ENCODE measurements at regions of chr1 and their contacts with region 1.

Region 1: DNA sequence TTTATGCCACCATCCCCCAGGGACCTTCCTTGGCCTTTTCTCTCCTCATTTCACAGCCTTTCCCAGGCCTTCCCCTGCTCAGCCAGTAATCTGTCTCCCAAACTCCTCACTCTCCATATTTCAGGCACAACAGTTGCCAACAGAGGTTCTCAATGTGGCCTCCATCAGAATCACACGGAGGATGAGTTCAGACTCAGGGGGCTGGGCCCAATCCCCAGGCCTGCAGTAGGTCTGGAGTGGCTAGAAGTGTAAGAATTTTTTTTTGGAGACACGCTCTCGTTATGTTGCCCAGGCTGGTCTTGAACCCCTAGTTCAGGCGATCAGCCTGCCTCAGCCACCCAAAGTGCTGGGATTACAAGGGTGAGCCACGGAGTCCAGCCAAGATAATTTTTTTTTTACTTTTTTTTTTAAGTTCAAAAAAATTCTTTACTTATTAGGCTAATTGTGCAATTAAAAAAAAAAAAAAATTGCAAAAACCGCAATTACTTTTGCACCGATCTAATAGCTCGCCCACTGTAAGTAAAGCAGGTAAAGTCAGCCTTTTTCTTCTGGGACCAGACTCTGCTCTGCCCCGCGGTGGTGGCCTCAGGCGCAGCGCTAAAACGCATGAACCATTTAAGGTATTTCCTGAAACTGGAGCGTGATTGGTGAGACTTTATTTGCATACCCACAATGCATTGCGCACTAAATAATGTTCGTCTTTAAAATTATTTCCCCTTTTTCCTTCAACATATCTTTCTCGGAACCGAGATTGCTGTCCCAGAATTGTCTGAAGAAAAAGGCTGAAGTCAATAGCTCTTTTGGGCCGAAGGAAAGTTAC is 18.7 kb downstream of the KIAA2013 start:
- DNase-seq: peak; percentile 95
- H3K4me3 Mint-ChIP-seq: peak overlapping the region; percentile 92
- H3K27ac Mint-ChIP-seq: peak overlapping the region; percentile 99
- H3K4me1 Mint-ChIP-seq: peaks cover 37% of the 10 kb centered on the region
- H3K27me3 Mint-ChIP-seq: peaks cover 16% of the 10 kb centered on the region

Region 2: DNA sequence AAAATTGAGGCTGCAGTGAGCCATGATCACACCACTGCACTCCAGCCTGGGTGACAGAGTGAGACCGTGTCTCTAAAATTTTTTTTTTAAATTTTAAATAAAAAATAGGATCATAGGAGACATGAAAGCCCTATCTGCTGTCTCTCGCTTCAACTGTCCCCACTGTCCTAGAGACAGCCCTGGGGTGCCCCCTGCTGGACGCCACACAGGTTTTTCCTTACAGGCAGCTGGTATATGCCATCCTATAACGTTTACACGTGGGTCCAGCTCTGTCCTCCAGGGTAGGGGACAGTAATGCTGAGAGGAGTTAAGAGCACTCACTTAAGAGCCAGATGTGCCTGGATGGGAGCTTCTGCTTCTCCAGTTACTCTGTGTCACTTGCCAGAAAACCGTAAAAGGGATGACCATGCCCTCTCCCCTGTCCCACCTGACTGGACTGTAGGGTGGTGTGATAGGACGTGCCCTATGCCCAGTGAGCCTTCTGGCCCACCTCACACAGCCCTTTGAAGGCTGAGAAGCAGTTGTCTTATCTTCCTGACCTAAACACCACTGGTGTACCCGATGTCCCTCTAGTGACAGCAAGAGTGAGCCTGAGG is 261.7 kb before region 1 on chr1:
- CTCF ChIA-PET with region 1: no interaction called
- POLR2A ChIA-PET with region 1: interaction called, 14 read pairs
- intact Hi-C with region 1: no loop called
- DNase-seq: peak; percentile 88
- H3K4me3 Mint-ChIP-seq: no peak overlapping the region
- H3K27ac Mint-ChIP-seq: no peak overlapping the region
- H3K4me1 Mint-ChIP-seq: peaks cover 11% of the 10 kb centered on the region
- H3K27me3 Mint-ChIP-seq: no peaks in the 10 kb centered on the region

Region 3: DNA sequence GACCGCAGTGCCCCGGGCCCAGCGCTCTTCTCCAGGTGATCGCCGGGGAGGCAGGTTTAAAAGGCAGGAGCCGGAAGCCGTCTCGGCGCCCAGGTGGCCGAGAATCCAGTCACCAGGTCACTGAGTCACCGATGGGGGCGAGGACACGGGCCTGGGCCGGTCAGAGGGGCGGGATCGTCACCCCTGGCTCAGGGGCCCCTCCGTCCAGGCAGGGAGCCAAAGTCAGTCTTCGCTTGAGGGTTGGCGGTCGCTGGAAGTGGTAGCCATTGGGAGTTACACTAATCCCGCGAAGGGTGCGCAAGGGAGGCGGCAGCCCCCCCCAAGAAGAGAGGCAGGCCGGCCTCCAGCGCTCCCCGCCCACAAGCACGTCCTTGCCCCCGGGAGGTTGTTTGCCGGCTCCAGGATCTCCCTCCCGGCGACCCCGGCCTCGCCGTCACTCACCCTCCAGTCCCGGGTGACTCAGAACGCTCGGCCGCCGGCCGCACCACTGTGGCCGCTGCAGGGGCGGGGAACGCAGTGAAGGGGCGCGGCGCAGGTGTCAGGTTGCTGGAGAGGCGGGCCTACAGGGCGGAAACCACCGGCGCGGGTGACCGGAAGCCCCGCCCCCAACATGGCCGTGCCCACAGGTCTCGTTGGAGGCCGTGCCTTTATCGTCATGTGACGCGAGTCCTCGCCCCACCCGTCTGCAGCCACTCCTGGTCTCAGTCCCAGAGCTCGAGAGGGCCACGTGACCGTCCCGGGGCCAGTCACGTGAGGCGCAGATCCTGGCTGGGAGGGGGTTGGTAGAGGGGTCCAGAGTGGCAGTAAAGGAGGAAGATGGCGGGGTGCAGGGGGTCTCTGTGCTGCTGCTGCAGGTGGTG is 101.8 kb before region 1 on chr1 and contains the starts of genes CLCN6 and MTHFR:
- CTCF ChIA-PET with region 1: no interaction called
- POLR2A ChIA-PET with region 1: interaction called, 57 read pairs
- intact Hi-C with region 1: loop called (anchors 1 kb)
- DNase-seq: peak; percentile 99
- H3K4me3 Mint-ChIP-seq: peak within 1 kb of the TSS; percentile 84
- H3K27ac Mint-ChIP-seq: peak within 1 kb of the TSS; percentile 88
- H3K4me1 Mint-ChIP-seq: peaks cover 51% of the 10 kb centered on the region
- H3K27me3 Mint-ChIP-seq: no peaks in the 10 kb centered on the region
- total RNA-seq, gene CLCN6: 11.3 to 11.6 TPM
- total RNA-seq, gene MTHFR: 12.8 to 13.3 TPM

Region 4: DNA sequence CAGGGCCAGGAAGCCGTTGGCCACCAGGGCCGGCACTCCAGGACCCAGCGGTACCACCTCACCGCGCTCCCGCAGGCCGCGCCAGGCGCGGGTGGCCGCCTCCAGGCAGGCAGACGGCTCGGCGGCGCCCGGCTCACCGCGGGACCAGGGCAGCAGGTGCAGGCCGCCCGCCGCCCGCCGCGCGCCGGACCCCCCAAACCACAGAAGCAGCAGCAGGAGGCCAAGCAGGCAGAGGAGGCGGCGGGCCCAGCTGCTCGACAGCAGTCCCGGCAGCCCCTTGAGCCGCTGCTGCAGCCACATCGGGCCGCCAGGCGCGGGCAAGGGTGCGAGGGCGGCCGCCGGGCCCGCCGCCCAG is 18.4 kb after region 1 on chr1:
- CTCF ChIA-PET with region 1: interaction called, 4 read pairs
- POLR2A ChIA-PET with region 1: interaction called, 174 read pairs
- intact Hi-C with region 1: loop called (anchors 1 kb)
- DNase-seq: peak; percentile 29
- H3K4me3 Mint-ChIP-seq: no peak overlapping the region
- H3K27ac Mint-ChIP-seq: no peak overlapping the region
- H3K4me1 Mint-ChIP-seq: peaks cover 33% of the 10 kb centered on the region
- H3K27me3 Mint-ChIP-seq: no peaks in the 10 kb centered on the region

Region 5: GRCh38 chr1:12019858-12020509 is 112.5 kb after region 1 on chr1:
- CTCF ChIA-PET with region 1: interaction called, 3 read pairs
- POLR2A ChIA-PET with region 1: interaction called, 58 read pairs
- intact Hi-C with region 1: loop called (anchors 1 kb)
- DNase-seq: peak; percentile 14
- H3K4me3 Mint-ChIP-seq: peak overlapping the region; percentile 80
- H3K27ac Mint-ChIP-seq: peak overlapping the region; percentile 72
- H3K4me1 Mint-ChIP-seq: peaks cover 9% of the 10 kb centered on the region
- H3K27me3 Mint-ChIP-seq: no peaks in the 10 kb centered on the region

Region 6: GRCh38 chr1:12059722-12060464 is 152.4 kb after region 1 on chr1:
- CTCF ChIA-PET with region 1: no interaction called
- POLR2A ChIA-PET with region 1: interaction called, 45 read pairs
- intact Hi-C with region 1: no loop called
- DNase-seq: peak; percentile 76
- H3K4me3 Mint-ChIP-seq: peak overlapping the region; percentile 24
- H3K27ac Mint-ChIP-seq: peak overlapping the region; percentile 78
- H3K4me1 Mint-ChIP-seq: peaks cover 79% of the 10 kb centered on the region
- H3K27me3 Mint-ChIP-seq: peaks cover 19% of the 10 kb centered on the region

Region 7: GRCh38 chr1:12161662-12162458 is 254.4 kb after region 1 on chr1:
- CTCF ChIA-PET with region 1: no interaction called
- POLR2A ChIA-PET with region 1: interaction called, 22 read pairs
- intact Hi-C with region 1: no loop called
- DNase-seq: peak; percentile 92
- H3K4me3 Mint-ChIP-seq: no peak overlapping the region
- H3K27ac Mint-ChIP-seq: peak overlapping the region; percentile 90
- H3K4me1 Mint-ChIP-seq: peaks cover 80% of the 10 kb centered on the region
- H3K27me3 Mint-ChIP-seq: no peaks in the 10 kb centered on the region

Measured in activated CD4-positive, alpha-beta memory T cell treated with anti-CD3 and anti-CD28 coated beads for 36 hours (primary cell).